GM13976 (cell line): ENCODE measurements at regions of chr22 and their contacts with region 1.

Region 1: DNA sequence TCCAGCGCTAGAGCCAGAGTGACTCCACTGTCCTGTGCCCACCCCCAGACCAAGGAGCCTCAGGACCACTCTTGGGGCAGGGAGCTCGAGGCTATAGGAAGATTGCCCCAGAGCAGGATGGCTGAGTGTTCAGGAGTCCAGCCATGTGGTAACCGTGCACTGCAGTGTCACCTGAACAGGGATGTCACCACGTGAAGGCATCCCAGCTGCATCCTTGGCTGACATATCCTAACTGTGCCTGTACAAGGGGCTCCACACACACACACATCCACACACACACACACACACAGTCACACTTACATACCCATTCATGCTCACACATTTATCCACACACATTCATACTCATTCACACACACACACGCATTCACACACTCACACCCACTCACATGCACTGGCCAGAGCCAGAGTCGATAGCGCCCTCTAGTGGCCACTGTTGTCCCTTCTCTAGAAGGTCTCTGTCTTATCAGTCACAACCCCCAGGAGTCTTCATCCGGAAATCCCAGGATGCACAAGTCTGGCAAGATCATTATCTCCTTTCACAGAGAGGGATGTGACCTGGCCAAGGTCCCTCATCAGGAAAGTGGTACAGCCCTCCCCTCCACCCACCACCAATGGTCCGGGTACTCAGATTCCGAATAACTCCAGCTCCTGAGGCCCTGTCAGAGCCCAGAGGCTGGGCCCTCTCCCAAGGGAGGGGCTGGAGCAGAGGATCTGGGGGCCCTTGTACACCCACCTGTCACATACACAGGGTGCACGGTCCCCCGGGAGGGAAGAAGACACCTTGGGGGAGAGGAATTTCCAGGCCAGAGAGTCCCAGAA is 55.1 kb downstream of the IGLL5 start:
- DNase-seq: peak; percentile 74
- CTCF ChIP-seq: peak; percentile 82

Region 2: DNA sequence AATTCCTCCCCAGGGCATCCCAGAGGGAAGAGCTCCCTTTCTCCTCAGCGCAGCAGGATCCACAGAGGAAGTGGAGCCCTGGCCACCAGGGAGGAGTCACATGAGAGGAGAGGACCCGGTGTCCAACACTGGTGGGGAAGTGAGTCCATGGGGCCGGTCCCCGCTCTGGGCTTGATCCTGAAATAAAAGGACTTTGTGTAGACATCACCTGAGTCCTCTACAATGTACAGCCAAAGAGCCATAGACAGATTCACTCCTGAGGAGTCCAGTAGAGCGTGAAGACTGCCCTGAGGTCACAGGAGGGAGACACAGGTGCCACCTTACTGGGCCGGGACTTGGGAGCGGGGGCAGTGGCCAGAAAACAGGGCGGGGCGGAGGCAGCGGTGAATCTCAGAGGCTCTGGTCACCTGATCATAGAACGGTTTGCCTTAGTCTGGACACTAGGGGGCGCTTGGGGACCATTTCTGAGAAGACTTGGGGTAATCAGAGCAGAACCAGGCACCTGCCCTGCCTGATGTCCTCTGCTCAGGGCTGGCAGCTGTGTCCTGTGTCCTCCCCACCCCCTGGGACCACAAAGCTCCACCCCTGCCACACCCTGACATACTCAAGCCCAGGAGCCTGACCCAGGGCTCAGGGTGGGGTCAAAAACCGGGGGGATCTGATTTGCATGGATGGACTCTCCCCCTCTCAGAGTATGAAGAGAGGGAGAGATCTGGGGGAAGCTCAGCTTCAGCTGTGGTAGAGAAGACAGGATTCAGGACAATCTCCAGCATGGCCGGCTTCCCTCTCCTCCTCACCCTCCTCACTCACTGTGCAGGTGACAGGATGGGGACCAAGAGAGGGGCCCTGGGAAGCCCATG is 585.5 kb before region 1 on chr22:
- in situ Hi-C with region 1: loop called (anchors 25 kb)
- DNase-seq: peak; percentile 93
- CTCF ChIP-seq: peak; percentile 77

Region 3: DNA sequence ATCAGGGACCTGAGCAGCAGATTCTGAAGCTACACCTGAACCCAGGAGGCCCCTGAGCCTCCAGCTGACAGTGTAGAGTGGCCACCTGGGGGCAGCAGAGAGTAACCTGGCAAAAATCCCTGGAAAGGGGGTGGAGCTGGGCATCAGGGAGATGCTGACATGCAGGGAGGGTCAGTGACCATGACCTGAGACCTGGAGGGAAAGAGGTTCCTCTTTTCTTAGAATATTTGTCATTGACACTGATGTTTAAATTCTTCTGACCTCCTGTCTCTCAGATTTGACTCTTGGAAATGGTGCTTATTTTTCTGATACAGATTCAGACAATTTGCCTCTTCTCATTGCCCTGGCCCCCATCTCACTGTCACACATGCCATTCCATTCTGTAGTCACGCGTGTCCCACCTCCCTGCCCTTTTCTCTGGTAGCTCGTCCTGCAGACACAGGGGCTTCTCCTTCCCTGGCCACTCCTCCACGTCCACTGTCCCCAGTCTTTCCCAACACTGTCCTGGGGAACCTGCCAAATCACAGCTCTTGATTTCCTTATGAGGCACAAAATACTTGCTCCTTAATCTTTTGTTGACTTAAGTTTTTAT is 172.3 kb before region 1 on chr22:
- in situ Hi-C with region 1: loop called (anchors 10 kb)
- DNase-seq: no peak
- CTCF ChIP-seq: peak; percentile 68

Region 4: GRCh38 chr22:22825213-22825593 is 117.5 kb before region 1 on chr22:
- in situ Hi-C with region 1: no loop called
- DNase-seq: no peak
- CTCF ChIP-seq: no peak

Region 5: GRCh38 chr22:23072911-23073491 is 130.3 kb after region 1 on chr22:
- in situ Hi-C with region 1: no loop called
- DNase-seq: no peak
- CTCF ChIP-seq: no peak